Activated CD4-positive, alpha-beta memory T cell treated with anti-CD3 and anti-CD28 coated beads for 36 hours (primary cell): ENCODE measurements at regions of chr7 and their contacts with region 1.

Region 1: GRCh38 chr7:112789817-112790585 is at the start of gene TMEM168:
- DNase-seq: peak; percentile 90
- H3K4me3 Mint-ChIP-seq: peak within 1 kb of the TSS; percentile 98
- H3K27ac Mint-ChIP-seq: peak within 1 kb of the TSS; percentile 85
- H3K4me1 Mint-ChIP-seq: peaks cover 44% of the 10 kb centered on the region
- H3K27me3 Mint-ChIP-seq: no peaks in the 10 kb centered on the region
- total RNA-seq, gene TMEM168: 16.1 to 17.4 TPM

Region 2: GRCh38 chr7:112510001-112510742 is 279.8 kb before region 1 on chr7:
- CTCF ChIA-PET with region 1: no interaction called
- POLR2A ChIA-PET with region 1: no interaction called
- intact Hi-C with region 1: loop called (anchors 5 kb)
- DNase-seq: peak; percentile 31
- H3K4me3 Mint-ChIP-seq: no peak overlapping the region
- H3K27ac Mint-ChIP-seq: no peak overlapping the region
- H3K4me1 Mint-ChIP-seq: peaks cover 13% of the 10 kb centered on the region
- H3K27me3 Mint-ChIP-seq: no peaks in the 10 kb centered on the region

Region 3: GRCh38 chr7:112556633-112557032 is 233.4 kb before region 1 on chr7:
- CTCF ChIA-PET with region 1: no interaction called
- POLR2A ChIA-PET with region 1: no interaction called
- intact Hi-C with region 1: loop called (anchors 1 kb)
- DNase-seq: peak; percentile 37
- H3K4me3 Mint-ChIP-seq: no peak overlapping the region
- H3K27ac Mint-ChIP-seq: no peak overlapping the region
- H3K4me1 Mint-ChIP-seq: peaks cover 17% of the 10 kb centered on the region
- H3K27me3 Mint-ChIP-seq: no peaks in the 10 kb centered on the region

Region 4: GRCh38 chr7:112939574-112940314 is 149.7 kb after region 1 on chr7:
- CTCF ChIA-PET with region 1: no interaction called
- POLR2A ChIA-PET with region 1: interaction called, 5 read pairs
- intact Hi-C with region 1: loop called (anchors 2 kb)
- DNase-seq: peak; percentile 100
- H3K4me3 Mint-ChIP-seq: peak overlapping the region; percentile 87
- H3K27ac Mint-ChIP-seq: peak overlapping the region; percentile 93
- H3K4me1 Mint-ChIP-seq: peaks cover 34% of the 10 kb centered on the region
- H3K27me3 Mint-ChIP-seq: peaks cover 2% of the 10 kb centered on the region